BJ (cell line): ENCODE measurements at regions of chr19 and their contacts with region 1.

Region 1: DNA sequence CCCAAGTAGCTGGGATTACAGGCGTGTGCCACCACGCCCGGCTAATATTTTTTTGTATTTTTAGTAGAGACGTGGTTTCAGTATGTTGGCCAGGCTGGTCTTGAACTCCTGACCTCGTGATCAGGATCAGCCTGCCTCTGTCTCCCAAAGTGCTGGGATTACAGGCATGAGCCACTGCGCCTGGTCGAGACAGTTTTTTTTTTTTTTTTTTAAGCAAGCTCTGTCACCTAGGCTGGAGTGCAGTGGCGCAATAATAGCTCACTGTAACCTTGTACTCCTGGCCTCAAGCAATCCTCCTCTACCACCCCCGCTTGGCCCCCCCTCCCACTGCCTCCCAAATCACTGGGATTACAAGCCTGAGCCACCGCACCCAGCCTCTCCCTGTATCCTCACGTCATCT is 6.4 kb upstream of the MAP2K7 start:
- DNase-seq: no peak
- H3K4me3 ChIP-seq: no peak overlapping the region
- H3K27me3 ChIP-seq: no peaks in the 10 kb centered on the region
- CTCF ChIP-seq: no peak

Region 2: GRCh38 chr19:7928736-7929701 is 31.7 kb after region 1 on chr19:
- CTCF ChIA-PET with region 1: interaction called, 4 read pairs
- POLR2A ChIA-PET with region 1: interaction called, 14 read pairs
- DNase-seq: peak; percentile 80
- H3K4me3 ChIP-seq: peak overlapping the region; percentile 7; the same call in 1 of the 2 replicates
- H3K27me3 ChIP-seq: no peaks in the 10 kb centered on the region
- CTCF ChIP-seq: peak; percentile 73

Region 3: GRCh38 chr19:8240274-8241229 is 343.3 kb after region 1 on chr19:
- CTCF ChIA-PET with region 1: no interaction called
- POLR2A ChIA-PET with region 1: no interaction called
- DNase-seq: peak; percentile 47
- H3K4me3 ChIP-seq: no peak overlapping the region
- H3K27me3 ChIP-seq: no peaks in the 10 kb centered on the region
- CTCF ChIP-seq: no peak